ENCODE measurements at regions of chr17 and their contacts with region 1.

Region 1: GRCh38 chr17:77542551-77543490 is 402.1 kb downstream of the SEC14L1 start:
- DNase-seq: peak; percentile 66 to 85
- ATAC-seq: peak; percentile 82 to 96 (median 94)
- H3K4me3 ChIP-seq: no peak overlapping the region
- H3K27ac ChIP-seq: peak overlapping the region in 9 of 10 donors; percentile 29 to 88 (median 71)
- H3K4me1 ChIP-seq: peaks cover 0 to 28% (median 13%) of the 10 kb centered on the region in 9 donors
- H3K27me3 ChIP-seq: peaks cover 0 to 20% (median 4%) of the 10 kb centered on the region in 7 donors
- CTCF ChIP-seq: peak; percentile 77 to 97 (median 92)

Region 2: GRCh38 chr17:77690271-77691161 is 147.7 kb after region 1 on chr17:
- intact Hi-C with region 1: loop called in 1 of 10 experiments (anchors 10 kb)
- DNase-seq: peak in 1 of 2 donors; percentile 28
- ATAC-seq: peak; percentile 23 to 73 (median 46)
- H3K4me3 ChIP-seq: peak overlapping the region in 6 of 10 donors; percentile 0 to 39 (median 29)
- H3K27ac ChIP-seq: peak overlapping the region in 5 of 10 donors; percentile 4 to 48 (median 18)
- H3K4me1 ChIP-seq: peaks cover 0 to 16% (median 8%) of the 10 kb centered on the region in 9 donors
- H3K27me3 ChIP-seq: peaks cover 0 to 28% (median 8%) of the 10 kb centered on the region in 7 donors
- CTCF ChIP-seq: no peak

Region 3: GRCh38 chr17:77734341-77735080 is 191.7 kb after region 1 on chr17:
- intact Hi-C with region 1: loop called in 8 of 10 experiments (anchors 2 to 10 kb)
- DNase-seq: peak; percentile 94 to 95
- ATAC-seq: peak; percentile 72 to 91 (median 84)
- H3K4me3 ChIP-seq: peak overlapping the region in 6 of 10 donors; percentile 8 to 29 (median 18)
- H3K27ac ChIP-seq: peak overlapping the region; percentile 74 to 96 (median 86)
- H3K4me1 ChIP-seq: peaks cover 27 to 56% (median 46%) of the 10 kb centered on the region in 9 donors
- H3K27me3 ChIP-seq: peaks cover 0 to 9% (median 0%) of the 10 kb centered on the region in 7 donors
- CTCF ChIP-seq: peak in 6 of 9 donors; percentile 6 to 51 (median 28)

Region 4: DNA sequence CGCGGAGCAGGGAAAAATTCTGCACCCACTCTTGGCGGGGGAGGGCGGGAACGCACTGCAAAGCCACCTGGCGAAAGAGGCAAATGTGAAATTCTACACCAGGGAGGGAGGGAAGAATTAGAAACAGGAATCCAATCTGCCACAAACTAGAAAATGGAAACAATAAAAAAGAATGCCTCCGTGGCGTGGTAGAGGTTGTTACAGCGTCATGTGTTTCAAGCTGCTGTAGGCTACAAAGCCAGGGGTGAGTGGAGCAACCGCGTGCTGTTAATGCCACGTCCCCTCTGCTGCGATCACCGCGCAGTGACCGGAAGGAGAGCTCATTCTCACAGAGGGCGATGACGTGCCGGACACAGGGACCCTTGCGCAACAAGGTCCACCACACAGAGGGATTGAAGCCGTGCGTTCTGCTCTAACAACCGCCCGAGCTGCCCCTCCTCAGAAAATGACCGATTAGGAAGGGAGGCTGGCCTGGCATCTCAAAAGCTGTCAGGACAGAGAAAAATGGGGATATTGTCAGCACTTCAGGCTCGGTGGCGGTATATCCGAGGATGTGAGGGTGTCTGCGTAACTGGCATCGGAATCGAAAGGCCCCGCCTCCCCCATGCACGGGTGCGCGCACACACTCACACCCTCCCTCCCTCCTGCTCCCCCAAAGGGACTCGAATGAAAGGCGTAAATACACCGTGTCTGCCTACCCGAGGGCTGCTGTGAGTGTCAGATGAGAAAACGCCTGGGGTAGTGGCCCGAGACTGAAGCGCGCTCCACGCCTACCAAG is 344.8 kb after region 1 on chr17:
- intact Hi-C with region 1: loop called in 1 of 10 experiments (anchors 5 kb)
- DNase-seq: peak; percentile 84
- ATAC-seq: peak; percentile 80 to 93 (median 87)
- H3K4me3 ChIP-seq: peak overlapping the region; percentile 14 to 65 (median 50)
- H3K27ac ChIP-seq: peak overlapping the region in 9 of 10 donors; percentile 47 to 90 (median 69)
- H3K4me1 ChIP-seq: peaks cover 6 to 42% (median 14%) of the 10 kb centered on the region in 9 donors
- H3K27me3 ChIP-seq: peaks cover 0 to 11% (median 0%) of the 10 kb centered on the region in 7 donors
- CTCF ChIP-seq: no peak

Region 5: GRCh38 chr17:78019367-78019975 is 476.6 kb after region 1 on chr17:
- intact Hi-C with region 1: loop called in 7 of 10 experiments (anchors 1 to 10 kb)
- DNase-seq: no peak
- ATAC-seq: peak in 1 of 8 donors; percentile 39
- H3K4me3 ChIP-seq: no peak overlapping the region
- H3K27ac ChIP-seq: peak overlapping the region in 3 of 10 donors; percentile 2 to 32 (median 3)
- H3K4me1 ChIP-seq: peaks cover 0 to 28% (median 13%) of the 10 kb centered on the region in 9 donors
- H3K27me3 ChIP-seq: no peaks in the 10 kb centered on the region
- CTCF ChIP-seq: peak in 8 of 9 donors; percentile 34 to 73 (median 66)

Region 6: DNA sequence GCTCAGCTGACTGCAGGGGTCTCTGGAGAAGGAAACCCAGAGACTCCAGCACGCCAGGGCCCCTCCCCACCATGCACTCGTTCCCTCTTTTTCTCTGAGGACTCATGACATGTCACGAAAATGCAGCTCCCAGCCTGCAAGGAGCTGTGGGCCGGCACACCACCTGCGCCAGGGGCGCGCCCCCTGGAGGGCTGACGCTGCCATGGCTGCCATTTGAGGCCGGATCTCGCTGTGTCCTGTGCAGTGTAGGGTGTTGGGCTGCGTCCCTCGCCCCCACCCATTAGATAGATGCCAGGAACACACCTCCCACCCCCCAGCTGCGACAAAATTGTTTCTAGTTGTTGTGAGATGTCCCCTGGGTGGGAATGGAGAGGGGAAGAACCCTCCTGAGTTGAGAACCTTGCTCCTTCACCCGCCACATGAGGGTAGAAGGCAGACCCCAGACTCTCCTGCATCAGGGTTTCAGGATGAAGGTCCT is 633.8 kb after region 1 on chr17:
- intact Hi-C with region 1: no loop called
- DNase-seq: peak; percentile 68 to 79
- ATAC-seq: peak in 7 of 8 donors; percentile 15 to 52 (median 36)
- H3K4me3 ChIP-seq: no peak overlapping the region
- H3K27ac ChIP-seq: peak overlapping the region in 4 of 10 donors; percentile 31 to 94 (median 88)
- H3K4me1 ChIP-seq: peaks cover 37 to 78% (median 59%) of the 10 kb centered on the region in 9 donors
- H3K27me3 ChIP-seq: no peaks in the 10 kb centered on the region
- CTCF ChIP-seq: peak in 8 of 9 donors; percentile 83 to 95 (median 92)